HepG2 (cell line): ENCODE measurements at regions of chr2 and their contacts with region 1.

Region 1: GRCh38 chr2:145760781-145761649 is 1241.1 kb upstream of the ZEB2 start:
- DNase-seq: peak; percentile 96
- ATAC-seq: peak; percentile 92
- H3K4me3 ChIP-seq: peak overlapping the region in 2 of 3 experiments; percentile 1 to 34; a peak in 1 of 6 replicates
- H3K27ac ChIP-seq: peak overlapping the region; percentile 93
- H3K4me1 ChIP-seq: peaks cover 78% of the 10 kb centered on the region
- H3K27me3 ChIP-seq: no peaks in the 10 kb centered on the region
- CTCF ChIP-seq: no peak
- EP300 ChIP-seq: peak; percentile 99 to 100
- POLR2A ChIP-seq: no peak
- RAD21 ChIP-seq: peak; percentile 55; the same call in 1 of the 2 replicates

Region 2: DNA sequence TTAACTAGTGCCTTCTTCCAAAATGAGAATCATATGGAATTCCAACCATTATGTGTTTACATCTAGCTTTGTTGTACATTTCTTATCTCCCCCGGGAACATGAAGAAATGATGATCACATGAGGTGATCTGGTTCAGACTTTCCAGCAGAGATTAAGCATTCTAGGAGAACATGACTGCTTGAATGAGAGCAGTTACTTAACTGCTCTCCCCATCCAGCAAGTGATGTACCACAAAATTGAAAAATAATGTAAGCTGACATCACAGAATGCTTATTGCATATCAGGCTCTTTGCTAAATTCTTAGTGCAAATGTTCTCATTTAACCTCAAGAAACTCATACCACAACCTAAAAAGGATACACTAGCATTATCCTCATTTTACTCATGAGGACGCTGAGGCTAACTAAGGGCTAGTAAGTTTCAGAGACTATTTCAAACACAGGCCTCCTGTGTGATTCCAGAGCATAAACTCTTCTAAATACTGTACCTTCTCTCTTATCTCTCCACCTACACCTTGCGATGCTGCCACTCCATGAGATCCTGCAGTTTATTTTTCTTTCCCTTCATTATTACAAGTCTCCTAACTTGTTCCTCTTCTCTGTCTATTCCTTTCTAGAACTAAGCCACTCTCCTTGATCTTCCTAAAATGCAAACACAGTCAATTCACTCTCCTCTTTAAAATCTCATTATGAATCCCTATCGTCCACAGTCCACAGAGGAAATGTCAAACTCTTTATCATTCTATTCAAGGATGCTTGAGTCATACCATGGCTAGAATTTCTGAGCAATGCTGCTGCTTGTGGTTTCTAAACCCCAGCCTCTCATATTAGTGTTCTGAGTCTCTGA is 16.3 kb before region 1 on chr2:
- CTCF ChIA-PET with region 1: no interaction called
- POLR2A ChIA-PET with region 1: no interaction called
- in situ Hi-C with region 1: no loop called
- intact Hi-C with region 1: no loop called
- DNase-seq: no peak
- ATAC-seq: no peak
- H3K4me3 ChIP-seq: no peak overlapping the region
- H3K27ac ChIP-seq: no peak overlapping the region
- H3K4me1 ChIP-seq: no peaks in the 10 kb centered on the region
- H3K27me3 ChIP-seq: no peaks in the 10 kb centered on the region
- CTCF ChIP-seq: no peak
- EP300 ChIP-seq: no peak
- POLR2A ChIP-seq: no peak
- RAD21 ChIP-seq: no peak

Region 3: DNA sequence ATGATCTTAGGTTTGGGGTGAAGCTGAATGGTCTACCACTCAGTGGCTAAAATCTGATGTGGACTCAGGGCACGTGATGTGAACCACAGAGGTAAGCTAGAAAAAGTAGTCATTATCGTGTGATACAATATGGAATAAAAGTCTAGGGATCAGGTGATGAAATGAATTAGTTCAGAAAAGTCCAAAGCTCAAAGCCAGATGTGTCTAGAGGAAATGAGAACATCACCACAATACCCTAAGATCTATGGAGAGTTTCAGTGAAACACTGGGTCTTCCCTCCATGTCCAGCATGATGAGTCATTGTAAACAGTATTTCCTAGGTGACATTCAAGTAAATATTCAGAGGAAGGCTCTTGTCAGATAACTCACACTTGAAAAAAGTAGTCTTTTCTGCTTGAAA is 16.3 kb after region 1 on chr2:
- CTCF ChIA-PET with region 1: no interaction called
- POLR2A ChIA-PET with region 1: interaction called, 11 read pairs
- in situ Hi-C with region 1: no loop called
- intact Hi-C with region 1: loop called (anchors 1 kb)
- DNase-seq: peak; percentile 88
- ATAC-seq: peak; percentile 96
- H3K4me3 ChIP-seq: no peak overlapping the region
- H3K27ac ChIP-seq: peak overlapping the region; percentile 52
- H3K4me1 ChIP-seq: peaks cover 23% of the 10 kb centered on the region
- H3K27me3 ChIP-seq: no peaks in the 10 kb centered on the region
- CTCF ChIP-seq: no peak
- EP300 ChIP-seq: peak in 1 of 2 experiments; percentile 88; a peak in 1 of 4 replicates
- POLR2A ChIP-seq: no peak
- RAD21 ChIP-seq: no peak

Region 4: GRCh38 chr2:145789636-145790035 is 28.6 kb after region 1 on chr2:
- CTCF ChIA-PET with region 1: no interaction called
- POLR2A ChIA-PET with region 1: no interaction called
- in situ Hi-C with region 1: no loop called
- intact Hi-C with region 1: no loop called
- DNase-seq: no peak
- ATAC-seq: no peak
- H3K4me3 ChIP-seq: no peak overlapping the region
- H3K27ac ChIP-seq: no peak overlapping the region
- H3K4me1 ChIP-seq: no peaks in the 10 kb centered on the region; the same call in 1 of the 2 replicates
- H3K27me3 ChIP-seq: no peaks in the 10 kb centered on the region
- CTCF ChIP-seq: no peak
- EP300 ChIP-seq: no peak
- POLR2A ChIP-seq: no peak
- RAD21 ChIP-seq: no peak

Region 5: DNA sequence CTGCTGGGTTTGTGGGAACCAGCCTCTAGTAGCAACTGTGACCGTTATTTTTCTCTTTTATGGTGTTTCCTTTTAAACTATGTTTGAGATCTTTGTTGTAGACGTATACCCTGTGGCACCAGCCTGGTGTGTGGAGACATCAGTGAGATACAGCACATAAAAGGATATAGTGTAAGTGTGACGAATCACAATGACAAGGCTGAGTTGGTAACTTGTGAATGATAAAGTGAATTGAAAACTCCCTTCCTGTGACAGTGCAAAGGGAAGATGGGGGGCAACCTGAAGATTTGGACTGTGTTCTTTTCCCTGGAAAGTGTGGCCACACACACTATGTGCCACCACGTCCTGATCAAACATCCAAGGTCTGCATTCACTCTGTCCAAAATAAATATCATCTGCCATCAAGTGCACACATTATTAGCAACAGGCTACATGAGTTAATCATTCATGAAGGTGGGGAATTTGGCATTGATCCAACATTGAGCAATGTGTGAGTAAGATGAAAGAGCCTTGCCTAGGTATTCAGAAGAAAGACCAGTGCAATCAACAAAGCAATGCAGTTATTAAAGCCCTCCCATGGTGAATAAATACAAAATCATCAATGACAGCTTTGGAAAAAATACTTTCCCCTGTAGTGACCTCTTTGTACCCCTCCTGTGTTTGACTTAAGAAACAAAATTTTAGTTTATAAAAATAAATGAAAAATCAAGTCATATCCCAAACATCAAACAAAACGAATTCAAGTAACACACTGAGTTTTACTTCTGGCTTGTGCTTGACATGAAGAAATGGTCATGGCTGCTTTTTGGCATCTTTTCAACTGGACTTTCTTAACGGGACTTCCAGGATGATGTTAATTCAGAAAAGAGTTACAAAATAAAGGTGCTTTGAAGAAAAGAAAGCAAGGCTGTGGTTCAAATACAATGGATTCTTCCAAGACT is 39.4 kb after region 1 on chr2:
- CTCF ChIA-PET with region 1: no interaction called
- POLR2A ChIA-PET with region 1: interaction called, 14 read pairs
- in situ Hi-C with region 1: no loop called
- intact Hi-C with region 1: loop called (anchors 1 kb)
- DNase-seq: peak; percentile 100
- ATAC-seq: peak; percentile 99
- H3K4me3 ChIP-seq: peak overlapping the region in 1 of 3 experiments; percentile 10; a peak in 1 of 6 replicates
- H3K27ac ChIP-seq: peak overlapping the region; percentile 89
- H3K4me1 ChIP-seq: peaks cover 52% of the 10 kb centered on the region
- H3K27me3 ChIP-seq: no peaks in the 10 kb centered on the region
- CTCF ChIP-seq: peak; percentile 25; the same call in 1 of the 2 replicates
- EP300 ChIP-seq: peak in 1 of 2 experiments; percentile 100; a peak in 3 of 4 replicates
- POLR2A ChIP-seq: no peak
- RAD21 ChIP-seq: no peak

Region 6: GRCh38 chr2:145919477-145919876 is 158.5 kb after region 1 on chr2:
- CTCF ChIA-PET with region 1: no interaction called
- POLR2A ChIA-PET with region 1: no interaction called
- in situ Hi-C with region 1: no loop called
- intact Hi-C with region 1: loop called (anchors 2 kb)
- DNase-seq: no peak
- ATAC-seq: no peak
- H3K4me3 ChIP-seq: no peak overlapping the region
- H3K27ac ChIP-seq: no peak overlapping the region
- H3K4me1 ChIP-seq: peaks cover 8% of the 10 kb centered on the region
- H3K27me3 ChIP-seq: no peaks in the 10 kb centered on the region
- CTCF ChIP-seq: peak; percentile 41
- EP300 ChIP-seq: no peak
- POLR2A ChIP-seq: no peak
- RAD21 ChIP-seq: peak; percentile 22; the same call in 1 of the 2 replicates

Region 7: DNA sequence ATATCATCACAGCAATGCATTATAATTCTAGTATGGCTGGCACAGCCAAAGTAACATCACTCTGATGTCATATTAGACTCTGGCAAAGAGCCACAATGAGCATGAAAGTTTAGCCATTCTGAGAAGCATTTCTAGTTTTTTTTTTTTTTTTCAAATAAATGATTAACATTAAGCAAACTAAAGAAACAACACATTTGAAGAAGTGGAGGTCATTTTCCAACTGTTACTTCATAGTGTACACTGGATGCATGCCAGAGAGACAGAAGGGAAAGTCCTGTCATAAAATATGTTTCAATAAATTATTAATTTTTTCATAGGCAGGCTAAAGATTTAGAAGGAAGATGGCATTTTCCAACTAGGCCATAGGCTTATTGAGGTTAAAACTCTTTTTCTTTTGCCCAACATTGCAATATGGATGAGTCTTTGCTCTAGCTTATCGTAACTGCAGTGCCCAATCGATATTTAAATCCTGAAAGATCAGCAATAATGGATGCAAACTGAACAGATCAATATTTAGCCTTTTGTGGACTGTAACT is 453.4 kb after region 1 on chr2:
- CTCF ChIA-PET with region 1: no interaction called
- POLR2A ChIA-PET with region 1: no interaction called
- in situ Hi-C with region 1: no loop called
- intact Hi-C with region 1: loop called (anchors 1 kb)
- DNase-seq: peak; percentile 83
- ATAC-seq: peak; percentile 87
- H3K4me3 ChIP-seq: peak overlapping the region in 1 of 3 experiments; percentile 10; a peak in 2 of 6 replicates
- H3K27ac ChIP-seq: no peak overlapping the region
- H3K4me1 ChIP-seq: peaks cover 52% of the 10 kb centered on the region
- H3K27me3 ChIP-seq: no peaks in the 10 kb centered on the region
- CTCF ChIP-seq: no peak
- EP300 ChIP-seq: peak in 1 of 2 experiments; percentile 77; a peak in 1 of 4 replicates
- POLR2A ChIP-seq: no peak
- RAD21 ChIP-seq: no peak

Region 8: DNA sequence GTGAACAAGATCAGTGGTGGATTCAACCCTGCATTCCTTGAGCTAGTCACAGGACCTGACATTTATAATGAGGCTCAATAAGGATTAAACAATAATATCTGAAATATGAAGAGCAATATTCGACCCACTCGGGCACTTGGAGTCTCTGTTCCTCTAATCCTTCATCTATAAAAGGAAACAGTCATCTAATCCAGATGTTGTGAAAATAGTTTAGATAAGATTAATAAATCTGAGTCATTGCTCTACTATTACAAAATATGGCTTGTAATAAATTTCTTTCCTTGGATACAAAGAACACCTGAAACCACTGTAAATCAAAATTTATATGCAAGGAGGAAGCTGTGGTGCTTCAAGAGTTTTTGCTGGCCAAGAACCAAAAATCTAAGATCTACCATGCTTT is 1236.9 kb after region 1 on chr2:
- CTCF ChIA-PET with region 1: no interaction called
- POLR2A ChIA-PET with region 1: no interaction called
- in situ Hi-C with region 1: no loop called
- intact Hi-C with region 1: no loop called
- DNase-seq: no peak
- ATAC-seq: no peak
- H3K4me3 ChIP-seq: no peak overlapping the region
- H3K27ac ChIP-seq: no peak overlapping the region
- H3K4me1 ChIP-seq: no peaks in the 10 kb centered on the region
- H3K27me3 ChIP-seq: no peaks in the 10 kb centered on the region
- CTCF ChIP-seq: no peak
- EP300 ChIP-seq: no peak
- POLR2A ChIP-seq: no peak
- RAD21 ChIP-seq: no peak